GM13977 (cell line): ENCODE measurements at regions of chr14 and their contacts with region 1.

Region 1: GRCh38 chr14:77980475-77981321 is 180.8 kb downstream of the ADCK1 start:
- DNase-seq: no peak
- CTCF ChIP-seq: no peak

Region 2: DNA sequence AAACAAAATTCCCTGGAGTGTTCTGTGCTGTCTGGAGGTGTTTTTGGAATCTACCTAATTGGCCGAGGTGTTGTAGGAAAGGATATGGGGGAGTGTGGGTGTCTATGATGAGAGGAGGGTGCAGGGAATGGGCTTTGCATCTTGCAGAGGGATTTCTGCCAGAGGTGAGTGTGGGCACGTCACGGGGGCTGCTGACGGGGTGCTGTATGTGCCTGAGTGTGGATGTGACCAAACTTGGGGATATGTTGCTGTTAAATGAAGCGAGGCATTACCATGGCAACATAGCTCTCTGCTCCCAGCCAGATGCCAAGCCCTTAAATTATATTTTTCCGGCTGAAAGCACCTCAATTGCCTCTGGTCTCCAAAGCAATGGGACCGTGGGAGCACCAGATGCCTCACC is 319.9 kb before region 1 on chr14:
- in situ Hi-C with region 1: loop called (anchors 25 kb)
- DNase-seq: no peak
- CTCF ChIP-seq: no peak